Sigmoid colon (tissue), 7 donors: ENCODE measurements at regions of chr4 and their contacts with region 1.

Region 1: GRCh38 chr4:15882675-15883086 is 55.9 kb downstream of the FGFBP1 start:
- DNase-seq: peak; percentile 69
- H3K4me3 ChIP-seq: no peak overlapping the region
- H3K27ac ChIP-seq: no peak overlapping the region
- H3K4me1 ChIP-seq: peaks cover 0 to 4% (median 0%) of the 10 kb centered on the region in 4 donors
- H3K27me3 ChIP-seq: no peaks in the 10 kb centered on the region
- CTCF ChIP-seq: peak; percentile 27 to 93 (median 86)
- EP300 ChIP-seq: no peak
- POLR2A ChIP-seq: no peak

Region 2: GRCh38 chr4:15479089-15479912 is 403.4 kb before region 1 on chr4:
- intact Hi-C with region 1: loop called (anchors 10 kb)
- DNase-seq: peak; percentile 78
- H3K4me3 ChIP-seq: peak overlapping the region; percentile 31 to 49 (median 40)
- H3K27ac ChIP-seq: peak overlapping the region; percentile 75 to 88 (median 82)
- H3K4me1 ChIP-seq: peaks cover 0 to 22% (median 19%) of the 10 kb centered on the region in 4 donors
- H3K27me3 ChIP-seq: no peaks in the 10 kb centered on the region
- CTCF ChIP-seq: peak; percentile 38 to 60 (median 45)
- EP300 ChIP-seq: no peak
- POLR2A ChIP-seq: no peak

Region 3: DNA sequence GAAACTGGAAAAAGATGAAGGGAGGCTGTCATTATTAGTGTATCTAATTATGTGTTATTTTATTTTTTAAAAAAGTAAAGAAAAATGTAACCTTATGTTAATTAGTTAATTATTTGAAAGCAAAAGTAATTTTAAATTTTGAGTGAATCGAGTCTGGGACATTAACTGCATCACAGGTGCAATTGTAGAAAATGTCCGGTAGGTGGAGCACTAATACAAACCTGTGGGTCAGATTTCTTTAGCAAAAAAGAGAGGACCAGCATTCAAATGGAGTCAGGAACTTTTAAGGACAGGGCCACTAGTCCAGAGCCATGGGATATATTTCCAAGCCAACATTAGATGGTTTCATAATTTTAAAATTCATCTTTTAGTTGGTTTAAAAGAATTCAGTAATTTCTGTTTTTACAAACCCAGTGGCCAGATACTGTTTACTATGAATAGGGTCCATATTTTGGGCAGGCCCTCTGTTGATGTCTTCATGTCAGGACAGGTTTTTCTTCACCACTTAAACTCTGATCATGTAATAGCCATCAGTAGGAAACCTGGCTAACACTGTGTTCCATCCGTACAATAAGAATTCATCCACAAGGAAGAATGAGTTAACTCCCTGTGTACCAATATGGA is 152.7 kb before region 1 on chr4:
- intact Hi-C with region 1: loop called (anchors 10 kb)
- DNase-seq: no peak
- H3K4me3 ChIP-seq: no peak overlapping the region
- H3K27ac ChIP-seq: no peak overlapping the region
- H3K4me1 ChIP-seq: peaks cover 0 to 7% (median 7%) of the 10 kb centered on the region in 4 donors
- H3K27me3 ChIP-seq: no peaks in the 10 kb centered on the region
- CTCF ChIP-seq: peak; percentile 60 to 85 (median 70)
- EP300 ChIP-seq: no peak
- POLR2A ChIP-seq: no peak

Region 4: GRCh38 chr4:15805583-15806517 is 76.8 kb before region 1 on chr4:
- intact Hi-C with region 1: loop called (anchors 5 kb)
- DNase-seq: no peak
- H3K4me3 ChIP-seq: no peak overlapping the region
- H3K27ac ChIP-seq: no peak overlapping the region
- H3K4me1 ChIP-seq: no peaks in the 10 kb centered on the region
- H3K27me3 ChIP-seq: no peaks in the 10 kb centered on the region
- CTCF ChIP-seq: peak in 3 of 4 experiments; percentile 41 to 60 (median 41)
- EP300 ChIP-seq: no peak
- POLR2A ChIP-seq: no peak

Region 5: GRCh38 chr4:15956179-15956850 is 73.6 kb after region 1 on chr4:
- intact Hi-C with region 1: loop called (anchors 2 kb)
- DNase-seq: peak; percentile 73
- H3K4me3 ChIP-seq: no peak overlapping the region
- H3K27ac ChIP-seq: no peak overlapping the region
- H3K4me1 ChIP-seq: no peaks in the 10 kb centered on the region
- H3K27me3 ChIP-seq: no peaks in the 10 kb centered on the region
- CTCF ChIP-seq: peak; percentile 53 to 88 (median 79)
- EP300 ChIP-seq: no peak
- POLR2A ChIP-seq: no peak

Region 6: DNA sequence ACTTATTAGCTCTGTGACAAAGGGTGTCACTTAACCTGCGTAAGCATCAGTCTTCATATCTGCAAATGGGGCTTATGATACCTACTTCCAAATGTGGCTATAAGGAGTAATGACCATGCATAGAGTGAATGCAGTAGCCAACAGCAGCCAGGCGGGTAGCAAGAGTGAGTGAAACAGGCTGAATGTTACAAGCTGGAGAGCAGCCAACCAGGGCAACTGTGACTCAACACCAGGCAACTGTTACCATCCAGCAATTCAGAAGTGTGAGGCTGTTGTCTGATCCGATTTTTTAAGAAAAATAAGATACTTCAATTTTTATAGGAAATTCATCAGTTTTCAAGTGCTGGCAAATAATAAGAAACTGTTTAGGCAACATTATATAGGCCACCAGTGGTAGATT is 613.8 kb after region 1 on chr4:
- intact Hi-C with region 1: no loop called
- DNase-seq: no peak
- H3K4me3 ChIP-seq: no peak overlapping the region
- H3K27ac ChIP-seq: no peak overlapping the region
- H3K4me1 ChIP-seq: no peaks in the 10 kb centered on the region
- H3K27me3 ChIP-seq: no peaks in the 10 kb centered on the region
- CTCF ChIP-seq: no peak
- EP300 ChIP-seq: no peak
- POLR2A ChIP-seq: no peak